Pancreas (tissue), 10 donors: ENCODE measurements at regions of chr6 and their contacts with region 1.

Region 1: DNA sequence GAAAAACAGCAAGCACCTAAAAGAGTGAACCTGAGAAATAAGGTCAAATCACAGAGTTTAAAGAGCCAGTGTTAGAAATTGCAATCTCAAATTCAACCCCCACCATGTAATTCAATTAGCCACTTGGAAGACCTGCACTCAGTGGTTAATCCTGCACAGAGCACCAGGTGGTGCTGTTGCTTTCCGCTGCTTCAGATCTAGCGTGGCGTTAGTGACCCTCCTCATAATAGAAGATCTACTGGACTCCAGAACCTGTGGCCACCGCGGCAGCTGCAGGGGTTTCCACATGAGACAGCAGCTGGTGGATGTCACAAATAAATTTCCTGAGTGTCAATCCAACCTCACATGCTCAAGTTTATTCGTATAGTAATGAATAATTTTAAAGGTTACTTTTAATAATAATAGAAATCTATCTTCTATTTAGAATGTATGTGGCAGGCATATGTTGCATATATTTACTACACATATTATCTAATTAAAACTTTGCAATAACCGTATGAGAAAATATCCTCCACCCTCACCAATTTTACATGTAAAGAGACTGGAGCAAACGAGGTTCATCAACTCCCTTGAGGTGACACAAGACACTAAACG is 84.4 kb downstream of the SYNE1 start:
- DNase-seq: peak in 5 of 6 donors; percentile 31 to 70 (median 46)
- ATAC-seq: peak; percentile 88 to 96 (median 94)
- H3K4me3 ChIP-seq: no peak overlapping the region
- H3K27ac ChIP-seq: no peak overlapping the region
- H3K4me1 ChIP-seq: no peaks in the 10 kb centered on the region
- H3K27me3 ChIP-seq: no peaks in the 10 kb centered on the region
- CTCF ChIP-seq: peak; percentile 36 to 69 (median 64)

Region 2: GRCh38 chr6:152642989-152643388 is 90.3 kb after region 1 on chr6:
- intact Hi-C with region 1: loop called in 2 of 3 experiments (anchors 5 to 10 kb)
- DNase-seq: peak in 5 of 6 donors; percentile 33 to 65 (median 45)
- ATAC-seq: peak; percentile 67 to 92 (median 90)
- H3K4me3 ChIP-seq: no peak overlapping the region
- H3K27ac ChIP-seq: no peak overlapping the region
- H3K4me1 ChIP-seq: no peaks in the 10 kb centered on the region
- H3K27me3 ChIP-seq: peaks cover 0 to 5% (median 0%) of the 10 kb centered on the region in 4 donors
- CTCF ChIP-seq: peak; percentile 15 to 28 (median 26)